Activated naive CD4-positive, alpha-beta T cell treated with anti-CD3 and anti-CD28 coated beads for 36 hours (primary cell): ENCODE measurements at regions of chr12 and their contacts with region 1.

Region 1: GRCh38 chr12:83005534-83006197 is 319.0 kb downstream of the TMTC2 start:
- DNase-seq: no peak
- H3K4me3 Mint-ChIP-seq: no peak overlapping the region
- H3K27ac Mint-ChIP-seq: no peak overlapping the region
- H3K4me1 Mint-ChIP-seq: no peaks in the 10 kb centered on the region
- H3K27me3 Mint-ChIP-seq: no peaks in the 10 kb centered on the region

Region 2: DNA sequence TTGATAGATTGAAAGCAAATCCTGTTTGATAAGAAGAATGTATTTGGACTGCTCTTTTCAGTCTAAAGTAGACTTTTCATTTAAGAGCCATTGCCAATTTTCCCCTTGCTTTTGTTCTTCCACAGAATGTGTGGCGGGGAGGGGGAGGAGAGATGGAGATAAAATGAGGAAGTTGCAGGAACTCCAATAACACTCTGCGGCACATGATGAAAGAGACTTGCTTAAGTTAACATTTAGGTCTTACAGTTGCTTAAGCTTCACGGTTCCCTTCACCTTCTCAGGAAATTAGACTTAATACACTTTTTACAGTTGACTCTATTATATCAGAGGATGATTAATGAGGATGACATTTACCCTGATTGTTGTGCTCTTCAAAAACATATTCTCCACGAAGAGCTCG is 218.3 kb after region 1 on chr12:
- CTCF ChIA-PET with region 1: no interaction called
- intact Hi-C with region 1: no loop called
- DNase-seq: no peak
- H3K4me3 Mint-ChIP-seq: no peak overlapping the region
- H3K27ac Mint-ChIP-seq: no peak overlapping the region
- H3K4me1 Mint-ChIP-seq: no peaks in the 10 kb centered on the region
- H3K27me3 Mint-ChIP-seq: no peaks in the 10 kb centered on the region

Region 3: DNA sequence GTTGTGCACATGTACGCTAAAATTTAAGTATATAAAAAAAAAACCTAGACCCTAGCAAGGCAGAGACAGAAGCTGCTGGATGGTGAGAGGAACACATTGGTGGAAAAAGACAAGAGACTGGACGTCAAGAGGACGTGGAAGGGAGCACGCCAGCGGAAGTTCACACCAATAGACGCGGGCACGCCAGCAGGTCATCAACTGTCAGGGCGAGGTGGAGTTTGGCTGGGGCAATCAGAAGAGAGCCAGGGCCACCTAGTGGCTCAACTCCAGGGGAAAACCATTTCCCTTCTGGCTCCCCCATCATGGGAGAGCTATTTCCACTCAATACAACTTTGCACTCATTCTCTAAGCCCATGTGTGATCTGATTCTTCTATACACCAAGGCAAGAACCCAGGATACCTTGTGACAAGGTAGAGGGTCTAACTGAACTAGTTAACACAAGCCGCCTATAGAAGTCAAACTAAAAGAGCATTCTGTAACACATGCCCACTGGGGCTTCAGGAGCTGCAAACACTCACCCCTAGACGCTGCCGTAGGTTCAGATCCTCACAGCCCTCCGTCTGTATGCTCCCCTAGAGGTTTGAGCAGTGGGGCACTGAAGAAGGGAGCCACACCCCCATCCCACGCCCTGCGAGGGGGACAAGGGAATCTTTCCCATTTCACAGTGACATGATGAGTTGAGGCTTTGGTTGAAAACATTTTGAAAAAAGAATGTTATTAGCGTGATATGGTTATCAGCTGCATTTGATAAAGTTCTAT is 383.8 kb after region 1 on chr12:
- CTCF ChIA-PET with region 1: no interaction called
- intact Hi-C with region 1: loop called (anchors 10 kb)
- DNase-seq: peak; percentile 5
- H3K4me3 Mint-ChIP-seq: no peak overlapping the region
- H3K27ac Mint-ChIP-seq: no peak overlapping the region
- H3K4me1 Mint-ChIP-seq: no peaks in the 10 kb centered on the region
- H3K27me3 Mint-ChIP-seq: no peaks in the 10 kb centered on the region